Activated T-helper 1 cell treated with anti-CD3 and anti-CD28 coated beads, Interleukin-12 subunit alpha, Interleukin-12 subunit beta, Interleukin-2, Interleukin-4 antibody, amounts not matched to agents 30 ng/mL and 10 ng/mL and 1 ng/mL, durations not matched to agents 14 hours and 24 hours and 36 hours (primary cell): ENCODE measurements at regions of chr14 and their contacts with region 1.

Region 1: DNA sequence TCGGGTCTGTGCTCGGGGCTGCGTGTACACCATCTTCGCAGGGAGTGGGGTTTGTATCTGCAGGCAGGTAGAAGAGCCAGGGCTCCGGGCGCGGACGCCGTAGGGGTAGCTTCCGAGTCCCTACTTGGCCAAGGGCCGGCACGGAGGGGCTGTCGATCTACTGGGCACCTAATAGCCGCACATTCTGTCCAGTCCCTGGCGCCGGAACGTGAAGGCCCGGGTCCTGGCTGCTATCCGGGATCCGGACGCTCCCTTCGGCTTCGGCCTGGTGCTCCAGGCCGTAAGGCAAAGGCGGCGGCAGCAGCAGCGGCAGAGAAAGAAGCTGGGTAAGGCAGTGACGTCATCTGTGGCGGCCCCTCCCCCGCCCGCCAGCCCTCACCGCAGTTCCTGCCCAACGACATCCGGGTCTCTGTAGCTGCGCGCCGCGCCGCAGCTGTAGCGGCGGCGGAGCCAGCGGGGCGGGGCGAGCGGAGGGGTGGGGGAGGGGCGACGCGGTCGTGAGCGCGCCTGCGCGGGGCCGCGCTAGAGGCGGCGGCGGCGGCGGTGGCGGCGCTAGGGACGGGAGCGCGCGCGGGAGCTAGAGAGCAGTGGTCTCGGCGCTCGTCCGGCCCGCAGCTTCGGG is at the start of gene PPM1A:
- DNase-seq: peak; percentile 90
- H3K4me3 Mint-ChIP-seq: peak within 1 kb of the TSS; percentile 96
- H3K27ac Mint-ChIP-seq: peak within 1 kb of the TSS; percentile 100
- H3K4me1 Mint-ChIP-seq: peaks cover 59% of the 10 kb centered on the region
- H3K27me3 Mint-ChIP-seq: no peaks in the 10 kb centered on the region
- total RNA-seq, gene PPM1A: 43.9 and 50.7 TPM in 2 replicates

Region 2: DNA sequence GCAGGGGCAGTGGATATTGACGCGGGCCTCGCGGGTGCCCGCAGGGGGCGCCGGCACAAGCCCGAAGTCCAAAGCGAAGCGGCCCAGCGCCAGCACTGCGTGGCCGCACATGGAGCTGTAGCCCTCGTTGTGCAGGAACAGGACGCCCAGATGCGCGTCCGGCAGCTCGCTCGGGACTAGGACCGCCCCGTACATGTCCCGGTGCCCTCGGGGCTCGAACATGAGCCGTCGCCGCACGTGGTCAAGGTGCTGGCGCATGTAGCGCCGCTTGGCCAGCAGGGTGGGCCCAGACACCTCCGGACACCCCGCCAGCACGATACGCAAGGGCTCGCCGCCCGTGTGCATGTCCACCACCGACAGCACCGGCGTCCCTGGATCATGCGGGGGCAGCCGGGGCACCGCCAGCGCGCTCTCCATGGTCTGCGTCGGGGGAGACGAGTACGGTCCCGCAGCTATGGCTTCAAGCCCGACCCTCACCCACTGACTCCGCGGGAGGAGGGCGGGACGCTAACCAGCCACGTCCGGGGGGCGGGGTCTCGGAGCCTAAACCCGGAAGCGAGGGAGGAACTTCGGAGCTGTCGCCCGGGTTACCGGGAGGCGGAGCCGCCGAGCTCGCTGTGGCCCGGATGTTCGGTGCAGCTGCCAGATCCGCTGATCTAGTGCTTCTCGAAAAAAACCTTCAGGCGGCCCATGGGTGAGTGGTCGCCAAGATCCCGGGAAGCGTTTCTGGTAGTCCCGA is 764.7 kb before region 1 on chr14 and contains the starts of genes JKAMP and L3HYPDH:
- intact Hi-C with region 1: loop called (anchors 5 kb)
- DNase-seq: peak; percentile 95
- H3K4me3 Mint-ChIP-seq: peak within 1 kb of the TSS; percentile 94
- H3K27ac Mint-ChIP-seq: peak within 1 kb of the TSS; percentile 90
- H3K4me1 Mint-ChIP-seq: peaks cover 61% of the 10 kb centered on the region
- H3K27me3 Mint-ChIP-seq: no peaks in the 10 kb centered on the region
- total RNA-seq, gene JKAMP: 27.6 and 28.8 TPM in 2 replicates
- total RNA-seq, gene L3HYPDH: 14.0 and 15.9 TPM in 2 replicates

Region 3: GRCh38 chr14:60164712-60165546 is 83.9 kb before region 1 on chr14 and contains the start of gene DHRS7:
- intact Hi-C with region 1: loop called (anchors 1 kb)
- DNase-seq: peak; percentile 55
- H3K4me3 Mint-ChIP-seq: peak within 1 kb of the TSS; percentile 95
- H3K27ac Mint-ChIP-seq: peak within 1 kb of the TSS; percentile 98
- H3K4me1 Mint-ChIP-seq: peaks cover 20% of the 10 kb centered on the region
- H3K27me3 Mint-ChIP-seq: no peaks in the 10 kb centered on the region
- total RNA-seq, gene DHRS7: 43.6 and 47.2 TPM in 2 replicates

Region 4: DNA sequence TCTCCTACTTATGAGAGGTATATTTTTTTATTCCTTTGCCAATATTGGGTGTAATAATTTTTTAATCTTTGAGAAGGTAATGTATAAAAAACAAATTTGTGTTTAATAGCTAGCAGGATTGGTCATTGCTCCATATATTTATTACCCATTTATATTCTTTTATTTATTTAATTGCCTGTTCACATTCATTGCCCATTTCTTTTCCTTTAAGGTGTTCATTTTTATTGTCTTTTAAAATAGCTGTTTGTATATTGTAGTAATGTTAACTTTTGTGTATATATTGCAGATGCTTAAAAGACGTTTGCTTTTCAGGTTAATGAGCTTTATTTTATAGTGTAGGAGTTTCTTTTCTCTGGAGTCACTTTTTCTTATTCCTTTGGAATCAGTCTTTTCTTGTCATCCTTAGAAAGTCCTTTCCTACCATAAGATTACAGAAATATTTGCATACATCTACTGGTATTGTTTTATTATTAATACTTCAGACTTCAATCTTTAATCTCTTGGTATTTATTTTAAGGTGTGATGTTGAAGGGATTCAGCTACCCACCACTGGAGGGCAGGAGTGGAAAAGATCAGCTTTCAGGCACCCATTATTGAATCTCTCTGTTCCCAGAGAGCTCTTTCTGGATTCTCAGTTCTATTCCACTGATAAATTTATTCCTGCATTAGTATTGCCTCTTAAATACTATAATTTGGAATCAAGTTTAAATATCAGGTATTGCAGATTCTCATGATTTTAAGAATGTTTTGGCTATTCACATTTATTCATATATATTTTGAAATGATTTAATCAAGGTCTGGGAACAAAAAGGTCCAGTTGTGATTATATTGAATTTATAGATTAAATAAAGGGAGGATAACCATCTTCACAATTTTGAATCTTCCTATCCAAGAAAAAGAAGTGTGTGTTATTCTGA is 17.5 kb after region 1 on chr14:
- intact Hi-C with region 1: loop called (anchors 2 kb)
- DNase-seq: no peak
- H3K4me3 Mint-ChIP-seq: no peak overlapping the region
- H3K27ac Mint-ChIP-seq: no peak overlapping the region
- H3K4me1 Mint-ChIP-seq: peaks cover 13% of the 10 kb centered on the region
- H3K27me3 Mint-ChIP-seq: no peaks in the 10 kb centered on the region

Region 5: GRCh38 chr14:60753264-60754119 is 504.7 kb after region 1 on chr14:
- intact Hi-C with region 1: loop called (anchors 5 kb)
- DNase-seq: peak; percentile 66
- H3K4me3 Mint-ChIP-seq: peak overlapping the region; percentile 66
- H3K27ac Mint-ChIP-seq: peak overlapping the region; percentile 90
- H3K4me1 Mint-ChIP-seq: peaks cover 53% of the 10 kb centered on the region
- H3K27me3 Mint-ChIP-seq: peaks cover 5% of the 10 kb centered on the region

Region 6: GRCh38 chr14:60805841-60806569 is 557.2 kb after region 1 on chr14:
- intact Hi-C with region 1: no loop called
- DNase-seq: no peak
- H3K4me3 Mint-ChIP-seq: no peak overlapping the region
- H3K27ac Mint-ChIP-seq: no peak overlapping the region
- H3K4me1 Mint-ChIP-seq: no peaks in the 10 kb centered on the region
- H3K27me3 Mint-ChIP-seq: no peaks in the 10 kb centered on the region